IMR-90 (cell line): ENCODE measurements at regions of chr2 and their contacts with region 1.

Region 1: GRCh38 chr2:150487537-150488429 is at the start of gene RND3:
- DNase-seq: peak; percentile 99
- ATAC-seq: peak; percentile 61
- H3K4me3 ChIP-seq: peak within 1 kb of the TSS; percentile 92
- H3K27ac ChIP-seq: peak within 1 kb of the TSS; percentile 100
- H3K4me1 ChIP-seq: 0 out of 2 replicates have a peak, but pooled peaks cover 2% of the 10 kb centered on the region
- H3K27me3 ChIP-seq: no peaks in the 10 kb centered on the region
- CTCF ChIP-seq: peak; percentile 93
- POLR2A ChIP-seq: peak; percentile 100
- RAD21 ChIP-seq: peak; percentile 86
- total RNA-seq, gene RND3: 331 and 449 TPM in 2 replicates

Region 2: DNA sequence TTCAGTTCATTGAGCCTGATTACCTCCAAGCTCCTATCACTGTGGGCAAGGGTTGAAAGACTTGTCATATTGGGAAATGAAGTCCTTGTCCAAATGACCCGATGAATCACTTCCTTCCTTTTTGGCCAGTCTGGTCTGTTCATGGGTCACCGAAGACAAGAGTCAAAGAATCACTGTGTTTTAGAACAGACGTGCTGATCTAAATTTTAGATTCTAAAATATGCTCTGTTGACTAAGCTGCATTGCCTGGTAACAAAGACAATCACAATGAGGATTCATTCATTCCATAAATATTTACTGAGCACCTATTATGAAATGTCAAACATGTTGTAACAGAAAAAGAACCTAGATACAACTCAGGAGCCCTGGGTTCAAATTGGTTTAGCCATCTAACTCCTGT is 99.1 kb after region 1 on chr2:
- CTCF ChIA-PET with region 1: no interaction called
- POLR2A ChIA-PET with region 1: interaction called, 13 read pairs
- dilution Hi-C with region 1: no loop called
- in situ Hi-C with region 1: loop called (anchors 5 kb)
- intact Hi-C with region 1: no loop called
- DNase-seq: peak; percentile 71
- ATAC-seq: peak; percentile 41
- H3K4me3 ChIP-seq: no peak overlapping the region
- H3K27ac ChIP-seq: peak overlapping the region; percentile 72; the same call in 1 of the 2 replicates
- H3K4me1 ChIP-seq: peaks cover 20% of the 10 kb centered on the region
- H3K27me3 ChIP-seq: no peaks in the 10 kb centered on the region
- CTCF ChIP-seq: no peak
- POLR2A ChIP-seq: no peak
- RAD21 ChIP-seq: no peak

Region 3: DNA sequence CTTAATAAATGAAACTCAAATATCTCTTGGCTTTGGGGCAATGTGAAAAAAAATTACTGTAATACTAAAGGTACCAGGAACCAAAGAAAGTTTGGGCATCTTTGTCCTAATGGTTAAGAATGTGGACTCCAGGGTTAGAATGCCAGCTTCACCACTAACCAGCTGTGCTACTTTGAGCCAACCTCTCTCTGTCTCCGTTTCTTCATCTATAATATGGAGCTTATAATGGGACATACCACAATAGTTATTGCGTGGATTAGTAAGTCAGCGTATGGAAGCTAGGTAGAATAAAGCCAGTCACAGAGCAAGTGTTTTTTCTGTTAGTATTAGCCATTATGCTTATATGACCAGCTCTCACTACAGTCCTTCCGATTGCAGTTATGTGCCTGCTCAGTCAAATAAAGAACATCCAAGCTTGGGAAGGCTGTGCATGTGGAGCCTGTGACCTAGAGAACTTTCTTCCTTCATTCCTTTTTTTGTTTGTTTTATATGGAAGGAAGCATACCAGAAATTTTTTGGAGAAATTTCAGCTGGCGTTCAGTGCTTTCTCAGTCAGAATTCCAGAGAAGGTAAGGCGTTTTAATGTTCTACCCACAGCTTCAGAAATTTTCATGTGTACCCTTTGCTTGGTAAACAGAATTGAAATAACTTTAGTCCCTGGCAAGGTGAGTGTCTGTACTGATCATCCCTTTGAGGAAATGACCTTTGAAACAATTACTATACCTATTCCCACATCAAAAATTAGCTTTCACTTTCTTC is 113.7 kb after region 1 on chr2:
- CTCF ChIA-PET with region 1: no interaction called
- POLR2A ChIA-PET with region 1: interaction called, 12 read pairs
- dilution Hi-C with region 1: no loop called
- in situ Hi-C with region 1: no loop called
- intact Hi-C with region 1: loop called (anchors 2 kb)
- DNase-seq: peak; percentile 81
- ATAC-seq: peak; percentile 94
- H3K4me3 ChIP-seq: no peak overlapping the region
- H3K27ac ChIP-seq: peak overlapping the region; percentile 90
- H3K4me1 ChIP-seq: peaks cover 9% of the 10 kb centered on the region
- H3K27me3 ChIP-seq: no peaks in the 10 kb centered on the region
- CTCF ChIP-seq: no peak
- POLR2A ChIP-seq: no peak
- RAD21 ChIP-seq: no peak

Region 4: GRCh38 chr2:150681120-150681804 is 193.5 kb after region 1 on chr2:
- CTCF ChIA-PET with region 1: no interaction called
- POLR2A ChIA-PET with region 1: interaction called, 3 read pairs
- dilution Hi-C with region 1: no loop called
- in situ Hi-C with region 1: no loop called
- intact Hi-C with region 1: loop called (anchors 5 kb)
- DNase-seq: peak; percentile 97
- ATAC-seq: peak; percentile 83
- H3K4me3 ChIP-seq: no peak overlapping the region
- H3K27ac ChIP-seq: peak overlapping the region; percentile 81
- H3K4me1 ChIP-seq: peaks cover 7% of the 10 kb centered on the region; the same call in 1 of the 2 replicates
- H3K27me3 ChIP-seq: no peaks in the 10 kb centered on the region
- CTCF ChIP-seq: no peak
- POLR2A ChIP-seq: no peak
- RAD21 ChIP-seq: peak; percentile 16; the same call in 1 of the 2 replicates

Region 5: GRCh38 chr2:150911766-150912280 is 424.0 kb after region 1 on chr2:
- CTCF ChIA-PET with region 1: no interaction called
- POLR2A ChIA-PET with region 1: interaction called, 5 read pairs
- dilution Hi-C with region 1: no loop called
- in situ Hi-C with region 1: loop called (anchors 5 kb)
- intact Hi-C with region 1: loop called (anchors 1 kb)
- DNase-seq: peak; percentile 95
- ATAC-seq: peak; percentile 95
- H3K4me3 ChIP-seq: peak overlapping the region; percentile 17; the same call in 1 of the 2 replicates
- H3K27ac ChIP-seq: peak overlapping the region; percentile 43
- H3K4me1 ChIP-seq: peaks cover 7% of the 10 kb centered on the region; the same call in 1 of the 2 replicates
- H3K27me3 ChIP-seq: no peaks in the 10 kb centered on the region
- CTCF ChIP-seq: peak; percentile 54
- POLR2A ChIP-seq: no peak
- RAD21 ChIP-seq: peak; percentile 69

Region 6: DNA sequence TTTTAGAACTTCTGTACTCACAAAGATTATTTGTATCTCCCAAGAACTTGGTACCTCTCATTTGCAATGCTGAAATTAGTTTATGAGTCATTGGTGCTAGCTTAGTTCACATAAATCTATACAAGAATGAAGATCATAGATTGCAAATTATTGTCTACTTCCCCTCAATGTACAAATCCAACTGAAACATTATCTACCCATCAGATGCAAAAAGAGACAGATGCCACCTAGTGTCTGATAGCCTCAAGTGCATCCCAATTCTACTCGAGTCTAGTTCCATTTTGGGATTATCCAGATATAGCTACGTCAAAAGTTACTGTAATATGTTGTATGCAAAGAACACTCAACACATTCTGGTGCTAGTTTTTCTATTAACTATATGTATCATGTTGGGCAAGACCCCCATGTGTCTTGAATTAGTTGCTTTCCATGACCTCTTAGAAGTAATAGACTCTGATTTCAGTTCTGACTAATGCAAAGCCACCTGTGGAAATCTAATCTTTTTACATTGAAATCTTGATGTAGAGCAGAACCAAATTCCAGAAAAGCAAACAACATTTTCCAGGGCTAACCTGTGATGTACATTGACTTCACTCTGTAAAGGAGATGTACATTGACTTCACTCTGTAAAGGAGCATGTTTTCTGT is 563.9 kb after region 1 on chr2:
- CTCF ChIA-PET with region 1: no interaction called
- POLR2A ChIA-PET with region 1: no interaction called
- dilution Hi-C with region 1: no loop called
- in situ Hi-C with region 1: loop called (anchors 10 kb)
- intact Hi-C with region 1: loop called (anchors 2 kb)
- DNase-seq: peak; percentile 67
- ATAC-seq: peak; percentile 71
- H3K4me3 ChIP-seq: no peak overlapping the region
- H3K27ac ChIP-seq: no peak overlapping the region
- H3K4me1 ChIP-seq: peaks cover 2% of the 10 kb centered on the region; the same call in 1 of the 2 replicates
- H3K27me3 ChIP-seq: no peaks in the 10 kb centered on the region
- CTCF ChIP-seq: peak; percentile 71
- POLR2A ChIP-seq: no peak
- RAD21 ChIP-seq: peak; percentile 71

Region 7: DNA sequence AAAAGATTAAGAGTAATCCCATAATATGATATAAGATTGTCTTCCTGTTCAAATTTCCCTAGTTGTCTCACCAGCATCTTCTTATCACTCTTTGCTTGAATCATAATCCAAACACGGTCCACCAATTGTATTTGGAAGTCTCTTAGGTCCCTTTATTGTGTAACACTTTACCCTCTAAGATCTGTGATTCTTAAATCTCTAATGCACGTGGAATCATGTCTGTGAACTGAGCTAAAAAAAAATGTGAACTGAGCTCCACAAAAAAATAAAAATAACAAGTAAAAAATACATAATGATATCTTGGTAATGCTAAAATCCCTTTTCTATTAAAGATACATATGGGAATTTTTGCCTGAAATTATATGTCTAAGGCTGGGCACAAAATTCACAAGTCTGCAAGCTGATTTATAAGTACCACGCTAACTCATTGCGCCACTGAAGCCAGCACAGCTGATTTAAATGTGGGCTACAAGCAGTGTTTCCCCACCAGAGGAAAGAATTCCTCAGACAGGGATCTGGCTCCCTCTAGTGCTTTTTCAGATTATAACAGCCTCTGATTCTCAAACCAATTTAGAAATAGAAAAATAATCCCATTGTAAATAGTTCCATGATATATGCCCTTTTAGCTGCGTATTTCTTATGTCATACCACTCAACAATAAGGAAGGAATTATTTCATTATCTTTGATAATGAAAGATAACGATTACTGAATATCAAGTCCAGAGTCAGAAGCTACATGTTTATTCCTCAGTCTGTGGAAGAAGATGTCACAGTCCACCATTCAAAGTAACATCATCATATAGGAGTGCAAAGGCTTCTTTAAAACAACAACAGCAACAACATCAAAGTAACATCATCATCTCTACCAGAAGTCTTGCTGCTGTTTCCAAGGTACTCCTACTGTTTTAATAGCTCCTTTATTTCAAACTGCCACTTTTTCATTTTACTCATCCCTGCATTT is 751.0 kb after region 1 on chr2:
- CTCF ChIA-PET with region 1: no interaction called
- POLR2A ChIA-PET with region 1: interaction called, 4 read pairs
- dilution Hi-C with region 1: no loop called
- in situ Hi-C with region 1: no loop called
- intact Hi-C with region 1: loop called (anchors 5 kb)
- DNase-seq: peak; percentile 89
- ATAC-seq: peak; percentile 79
- H3K4me3 ChIP-seq: no peak overlapping the region
- H3K27ac ChIP-seq: no peak overlapping the region; the same call in 1 of the 2 replicates
- H3K4me1 ChIP-seq: peaks cover 9% of the 10 kb centered on the region
- H3K27me3 ChIP-seq: no peaks in the 10 kb centered on the region
- CTCF ChIP-seq: peak; percentile 95
- POLR2A ChIP-seq: peak; percentile 47; the same call in 1 of the 2 replicates
- RAD21 ChIP-seq: peak; percentile 99